Naive thymus-derived CD4-positive, alpha-beta T cell (primary cell): ENCODE measurements at regions of chr19 and their contacts with region 1.

Region 1: GRCh38 chr19:56140583-56141416 is at the start of gene ZNF444:
- DNase-seq: peak; percentile 93 to 100 (median 100)
- ATAC-seq: peak; percentile 91
- H3K4me3 ChIP-seq: peak within 1 kb of the TSS; percentile 60
- H3K4me3 Mint-ChIP-seq: peak within 1 kb of the TSS; percentile 88 to 97 (median 92)
- H3K27ac ChIP-seq: peak within 1 kb of the TSS; percentile 85
- H3K27ac Mint-ChIP-seq: peak within 1 kb of the TSS; percentile 84 to 98 (median 91)
- H3K4me1 ChIP-seq: peaks cover 4 to 22% of the 10 kb centered on the region in 2 donors
- H3K4me1 Mint-ChIP-seq: peaks cover 27 to 49% (median 43%) of the 10 kb centered on the region in 7 donors
- H3K27me3 ChIP-seq: no peaks in the 10 kb centered on the region
- H3K27me3 Mint-ChIP-seq: peaks cover 0 to 4% (median 0%) of the 10 kb centered on the region in 5 donors
- total RNA-seq, gene ZNF444: 22.2 to 49.6 (median 35.7) TPM

Region 2: GRCh38 chr19:54463531-54464043 is 1677.2 kb before region 1 on chr19 and contains the start of gene LENG9:
- CTCF ChIA-PET with region 1: no interaction called
- POLR2A ChIA-PET with region 1: no interaction called
- intact Hi-C with region 1: loop called in 1 of 2 experiments (anchors 2 kb)
- DNase-seq: peak; percentile 73 to 97 (median 87)
- ATAC-seq: peak; percentile 81
- H3K4me3 ChIP-seq: peak within 1 kb of the TSS; percentile 88
- H3K4me3 Mint-ChIP-seq: peak within 1 kb of the TSS; percentile 84 to 95 (median 92)
- H3K27ac ChIP-seq: peak within 1 kb of the TSS; percentile 71
- H3K27ac Mint-ChIP-seq: peak within 1 kb of the TSS; percentile 86 to 98 (median 93)
- H3K4me1 ChIP-seq: peaks cover 17 to 23% of the 10 kb centered on the region in 2 donors
- H3K4me1 Mint-ChIP-seq: peaks cover 16 to 35% (median 33%) of the 10 kb centered on the region in 7 donors
- H3K27me3 ChIP-seq: peaks cover 0 to 3% of the 10 kb centered on the region in 2 donors
- H3K27me3 Mint-ChIP-seq: peaks cover 5 to 23% (median 7%) of the 10 kb centered on the region in 5 donors
- total RNA-seq, gene LENG9: 3.5 to 6.1 (median 4.3) TPM

Region 3: GRCh38 chr19:55283548-55284380 is 857.0 kb before region 1 on chr19 and contains the start of gene BRSK1:
- CTCF ChIA-PET with region 1: no interaction called
- POLR2A ChIA-PET with region 1: no interaction called
- intact Hi-C with region 1: no loop called
- DNase-seq: peak in 5 of 9 donors; percentile 20 to 42 (median 28)
- ATAC-seq: no peak
- H3K4me3 ChIP-seq: no peak within 1 kb of the TSS
- H3K4me3 Mint-ChIP-seq: peak within 1 kb of the TSS; percentile 12 to 83 (median 62)
- H3K27ac ChIP-seq: no peak within 1 kb of the TSS
- H3K27ac Mint-ChIP-seq: peak within 1 kb of the TSS; percentile 28 to 75 (median 54)
- H3K4me1 ChIP-seq: peaks cover 6 to 11% of the 10 kb centered on the region in 2 donors
- H3K4me1 Mint-ChIP-seq: peaks cover 12 to 41% (median 32%) of the 10 kb centered on the region in 7 donors
- H3K27me3 ChIP-seq: no peaks in the 10 kb centered on the region
- H3K27me3 Mint-ChIP-seq: peaks cover 0 to 9% (median 0%) of the 10 kb centered on the region in 5 donors
- total RNA-seq, gene BRSK1: 0.41 to 6.3 (median 3.4) TPM

Region 4: DNA sequence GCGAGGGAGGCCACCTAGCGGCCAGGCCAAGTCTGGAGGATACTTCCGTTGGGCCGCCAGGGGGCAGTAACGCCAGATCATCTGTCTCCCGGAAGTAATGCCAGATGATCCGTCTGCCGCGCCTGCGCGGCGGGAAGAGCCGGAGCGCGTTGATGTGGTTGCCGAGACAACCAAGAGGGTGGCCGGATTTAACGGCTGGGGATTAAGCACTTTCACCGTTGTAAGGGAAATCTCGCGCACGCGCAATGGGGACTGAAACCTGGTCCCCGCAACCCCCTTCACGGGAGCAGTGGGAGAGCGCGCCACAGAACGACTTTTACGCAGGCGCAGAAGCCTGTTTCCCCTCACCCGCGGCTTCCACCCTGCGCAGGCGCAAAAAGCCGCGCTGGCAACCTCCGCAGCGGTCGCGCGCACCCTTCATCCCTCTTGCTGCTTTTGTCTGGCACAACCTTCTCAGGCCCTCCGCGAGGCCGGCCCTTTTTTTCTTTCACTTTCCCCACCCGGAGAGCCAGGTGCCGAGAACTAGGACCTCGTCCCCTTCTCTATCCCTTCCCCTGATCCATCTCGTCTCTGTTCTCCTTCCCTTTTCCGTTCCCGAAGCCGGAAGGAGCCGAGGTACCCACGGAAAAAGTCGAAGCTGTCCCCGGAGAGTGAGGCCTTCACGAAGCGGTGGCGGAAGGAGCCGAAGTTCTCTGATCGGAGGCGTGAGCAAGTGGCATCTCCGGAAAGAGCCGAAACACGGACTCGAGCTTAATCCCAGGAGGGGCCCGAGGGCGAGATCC is 486.9 kb before region 1 on chr19:
- CTCF ChIA-PET with region 1: no interaction called
- POLR2A ChIA-PET with region 1: no interaction called
- intact Hi-C with region 1: loop called in 1 of 2 experiments (anchors 1 kb)
- DNase-seq: peak; percentile 95 to 100 (median 100)
- ATAC-seq: peak; percentile 83
- H3K4me3 ChIP-seq: peak overlapping the region; percentile 98
- H3K4me3 Mint-ChIP-seq: peak overlapping the region; percentile 83 to 99 (median 96)
- H3K27ac ChIP-seq: peak overlapping the region; percentile 99
- H3K27ac Mint-ChIP-seq: peak overlapping the region; percentile 95 to 100 (median 99)
- H3K4me1 ChIP-seq: peaks cover 30 to 36% of the 10 kb centered on the region in 2 donors
- H3K4me1 Mint-ChIP-seq: peaks cover 29 to 55% (median 39%) of the 10 kb centered on the region in 7 donors
- H3K27me3 ChIP-seq: no peaks in the 10 kb centered on the region
- H3K27me3 Mint-ChIP-seq: peaks cover 0 to 2% (median 0%) of the 10 kb centered on the region in 5 donors

Region 5: DNA sequence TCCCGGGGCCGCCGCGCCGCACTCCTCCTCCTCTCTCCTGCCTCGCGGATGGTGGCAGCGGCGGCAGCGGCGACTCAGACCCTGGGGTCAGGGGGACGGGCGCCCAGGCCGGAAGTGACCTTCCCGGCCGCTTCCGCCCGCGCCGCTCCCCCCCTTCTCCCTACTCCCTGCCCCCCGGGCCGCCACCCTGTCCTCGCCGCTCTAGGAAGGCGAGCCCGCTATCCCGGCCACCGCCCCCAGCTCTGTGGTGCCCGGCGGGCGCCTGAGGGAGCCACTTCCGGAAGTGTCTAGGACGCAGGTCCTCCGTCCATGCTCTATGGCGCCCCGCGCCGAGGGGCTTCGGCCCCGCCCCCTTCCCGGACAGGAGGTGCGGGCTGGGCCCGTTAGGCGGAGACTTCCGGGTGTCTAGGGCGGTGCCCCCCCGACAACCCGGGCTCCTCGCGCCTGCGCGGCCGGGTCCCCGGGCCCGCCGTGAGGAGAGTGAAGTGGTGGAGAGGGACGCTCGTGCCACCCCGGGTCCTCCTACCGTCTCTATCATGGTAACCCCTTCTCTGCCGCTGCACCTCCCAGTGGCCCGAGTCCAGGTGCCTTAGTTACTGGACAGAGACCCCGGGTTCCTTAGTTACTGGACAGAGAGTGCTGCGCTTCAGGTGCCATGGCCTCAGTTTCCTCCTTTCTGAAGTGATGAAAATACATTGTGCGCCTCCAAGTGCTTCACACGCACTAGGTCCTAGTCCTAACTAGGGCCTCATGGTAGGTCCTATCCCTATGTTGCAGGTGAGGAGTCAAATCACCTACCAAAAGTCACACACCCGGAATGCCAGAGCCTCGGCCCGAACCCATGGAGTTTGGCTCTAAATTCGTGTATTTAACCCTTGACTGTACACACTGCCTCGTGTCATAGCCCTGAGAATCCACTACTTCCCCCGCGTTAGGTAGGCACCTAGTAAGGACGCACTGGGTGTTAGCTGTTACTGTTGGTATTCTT is 19.3 kb before region 1 on chr19 and contains the start of gene ZNF787:
- CTCF ChIA-PET with region 1: interaction called, 3 read pairs
- POLR2A ChIA-PET with region 1: interaction called, 40 read pairs
- intact Hi-C with region 1: loop called (anchors 1 kb)
- DNase-seq: peak; percentile 94 to 98 (median 98)
- ATAC-seq: peak; percentile 88
- H3K4me3 ChIP-seq: peak within 1 kb of the TSS; percentile 79
- H3K4me3 Mint-ChIP-seq: peak within 1 kb of the TSS; percentile 85 to 93 (median 88)
- H3K27ac ChIP-seq: peak within 1 kb of the TSS; percentile 97
- H3K27ac Mint-ChIP-seq: peak within 1 kb of the TSS; percentile 87 to 98 (median 95)
- H3K4me1 ChIP-seq: peaks cover 8 to 34% of the 10 kb centered on the region in 2 donors
- H3K4me1 Mint-ChIP-seq: peaks cover 17 to 72% (median 58%) of the 10 kb centered on the region in 7 donors
- H3K27me3 ChIP-seq: no peaks in the 10 kb centered on the region
- H3K27me3 Mint-ChIP-seq: no peaks in the 10 kb centered on the region
- total RNA-seq, gene ZNF787: 19.7 to 41.2 (median 33.0) TPM

Region 6: DNA sequence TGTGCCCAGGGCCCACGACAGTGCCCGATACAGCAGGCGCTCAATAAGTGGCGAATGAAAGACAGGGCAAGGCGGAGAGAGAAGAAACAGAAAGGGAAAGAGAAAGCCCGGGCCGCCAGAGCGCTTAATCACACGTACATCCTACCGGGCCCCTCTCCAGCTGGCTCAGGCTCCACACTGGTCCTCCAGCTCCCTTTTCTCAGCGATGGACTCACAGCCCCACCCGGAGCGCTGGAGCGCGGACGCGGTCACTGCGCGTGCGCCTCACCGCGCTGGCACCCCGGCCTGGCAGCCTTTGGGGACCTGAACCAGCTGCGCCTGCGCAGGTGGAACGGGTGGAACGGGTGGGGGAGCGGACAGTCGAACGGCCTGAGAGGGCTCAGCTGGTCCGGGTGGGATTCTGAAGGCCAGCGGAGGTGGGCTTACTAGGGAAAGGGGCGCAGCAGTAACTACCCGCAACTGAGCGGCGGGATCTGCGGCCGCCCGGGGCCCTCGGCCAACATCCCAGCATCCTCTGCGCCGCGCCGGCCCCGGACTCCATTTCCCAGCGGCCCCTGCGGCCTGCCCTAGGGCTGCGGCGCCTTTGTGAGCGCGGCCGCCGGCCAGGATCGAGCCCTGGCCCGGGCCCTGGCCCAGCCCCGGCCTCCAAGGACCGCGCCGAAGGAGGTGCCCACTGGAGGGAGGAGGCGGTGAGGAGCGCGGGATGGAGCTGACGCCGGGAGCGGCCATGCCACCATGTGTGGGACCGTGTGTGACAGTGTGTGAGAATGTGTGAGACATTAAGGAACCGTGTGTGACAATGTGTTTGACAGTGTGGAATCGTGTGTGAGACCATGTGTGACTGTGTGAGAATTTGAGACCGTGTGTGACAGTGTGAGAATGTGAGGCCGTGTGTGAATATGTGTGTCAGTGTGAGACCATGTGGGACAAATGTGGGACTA is 263.2 kb after region 1 on chr19 and contains the start of gene ZNF583:
- CTCF ChIA-PET with region 1: no interaction called
- POLR2A ChIA-PET with region 1: no interaction called
- intact Hi-C with region 1: loop called in 1 of 2 experiments (anchors 2 kb)
- DNase-seq: peak; percentile 82 to 93 (median 90)
- ATAC-seq: peak; percentile 93
- H3K4me3 ChIP-seq: peak within 1 kb of the TSS; percentile 86
- H3K4me3 Mint-ChIP-seq: peak within 1 kb of the TSS; percentile 87 to 98 (median 94)
- H3K27ac ChIP-seq: peak within 1 kb of the TSS; percentile 96
- H3K27ac Mint-ChIP-seq: peak within 1 kb of the TSS; percentile 80 to 98 (median 95)
- H3K4me1 ChIP-seq: peaks cover 8 to 16% of the 10 kb centered on the region in 2 donors
- H3K4me1 Mint-ChIP-seq: peaks cover 19 to 37% (median 30%) of the 10 kb centered on the region in 7 donors
- H3K27me3 ChIP-seq: no peaks in the 10 kb centered on the region
- H3K27me3 Mint-ChIP-seq: no peaks in the 10 kb centered on the region
- total RNA-seq, gene ZNF583: 2.4 to 14.3 (median 3.1) TPM